Heart right ventricle (tissue), 16 donors: ENCODE measurements at regions of chr13 and their contacts with region 1.

Region 1: DNA sequence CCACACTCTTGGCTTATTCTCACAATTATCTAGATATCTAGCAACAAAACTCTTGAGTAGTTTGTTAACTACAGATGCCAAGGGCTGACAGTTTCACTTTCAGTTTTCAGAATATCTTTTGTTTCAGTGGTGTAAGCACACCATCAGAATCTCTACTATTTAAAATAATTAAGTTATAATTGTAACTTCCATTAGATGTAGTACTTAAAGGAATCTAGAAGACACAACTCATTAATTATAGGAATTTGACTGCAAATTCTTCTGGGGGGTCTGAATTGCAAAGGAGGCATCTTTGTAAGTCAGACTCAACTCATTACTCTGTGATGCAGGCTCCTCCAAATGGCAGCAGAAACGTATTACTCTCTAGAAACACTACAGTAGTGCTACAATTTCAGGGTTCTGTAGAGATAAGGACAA is 44.9 kb upstream of the USPL1 start:
- DNase-seq: peak in 1 of 2 donors; percentile 42
- ATAC-seq: peak in 6 of 8 donors; percentile 75 to 82 (median 77)
- H3K4me3 ChIP-seq: peak overlapping the region in 9 of 10 donors; percentile 25 to 51 (median 39)
- H3K27ac ChIP-seq: peak overlapping the region in 8 of 10 donors; percentile 38 to 80 (median 62)
- H3K4me1 ChIP-seq: peaks cover 0 to 57% (median 25%) of the 10 kb centered on the region in 9 donors
- H3K27me3 ChIP-seq: no peaks in the 10 kb centered on the region
- CTCF ChIP-seq: peak in 6 of 9 donors; percentile 16 to 59 (median 48)

Region 2: DNA sequence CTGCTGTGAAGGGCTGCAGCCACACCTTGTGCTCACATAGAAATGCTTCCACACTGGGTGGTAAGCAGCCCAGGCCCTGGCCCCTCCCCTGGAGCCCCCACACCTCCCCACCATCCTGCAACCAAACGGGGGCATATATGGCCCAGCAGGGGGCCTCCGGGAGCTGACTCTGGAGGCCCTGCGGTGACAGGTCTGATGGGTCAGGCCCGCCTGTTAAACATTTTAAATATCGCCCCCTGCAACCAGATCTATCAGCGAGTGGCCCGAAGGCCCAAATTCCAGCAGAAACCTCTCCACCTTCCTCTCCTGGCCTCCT is 217.5 kb before region 1 on chr13:
- intact Hi-C with region 1: loop called in 1 of 10 experiments (anchors 10 kb)
- DNase-seq: peak in 1 of 2 donors; percentile 37
- ATAC-seq: peak in 7 of 8 donors; percentile 63 to 87 (median 79)
- H3K4me3 ChIP-seq: no peak overlapping the region
- H3K27ac ChIP-seq: no peak overlapping the region
- H3K4me1 ChIP-seq: peaks cover 0 to 11% (median 0%) of the 10 kb centered on the region in 9 donors
- H3K27me3 ChIP-seq: no peaks in the 10 kb centered on the region
- CTCF ChIP-seq: peak; percentile 20 to 69 (median 60)

Region 3: DNA sequence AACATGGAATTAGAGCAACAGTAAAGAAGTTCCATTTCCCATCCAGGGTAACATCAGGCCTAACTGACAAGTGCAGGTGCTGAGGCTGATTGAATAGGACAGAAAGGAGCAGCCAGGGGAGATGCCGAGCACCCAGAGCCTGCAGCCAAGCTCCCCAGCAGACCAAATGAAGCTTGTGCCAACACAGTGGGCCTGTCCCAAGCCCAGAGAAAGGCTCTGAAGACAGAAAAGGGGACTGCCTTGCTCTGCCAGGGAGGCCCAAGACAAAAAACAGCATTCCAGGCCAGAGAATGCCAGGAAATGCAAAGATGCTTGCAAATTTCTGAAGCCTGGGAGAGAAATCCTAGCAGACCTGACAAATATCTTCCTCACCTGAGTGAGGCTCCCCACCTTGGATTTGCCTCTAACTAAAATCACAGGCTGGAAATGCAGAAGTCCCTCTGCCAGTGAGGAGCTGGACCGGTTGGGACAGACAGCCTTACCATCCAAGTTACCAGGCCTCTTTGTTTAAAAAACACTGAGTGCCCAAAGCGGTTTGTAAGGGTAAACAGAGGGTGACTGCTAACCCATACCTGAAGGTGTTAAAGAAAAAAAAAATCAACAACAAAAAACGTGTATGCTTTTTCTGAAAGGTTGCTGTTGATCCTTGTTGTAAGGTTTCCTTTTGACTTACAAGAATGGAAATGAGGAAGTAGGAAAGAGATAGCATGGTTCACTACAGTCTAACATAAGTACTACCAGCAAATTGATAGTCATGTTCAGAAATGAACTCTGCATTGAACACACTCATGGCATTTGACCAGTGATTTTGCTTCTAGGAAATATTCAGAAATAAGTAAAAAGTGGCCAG is 95.3 kb before region 1 on chr13:
- intact Hi-C with region 1: loop called in 2 of 10 experiments (anchors 10 kb)
- DNase-seq: no peak
- ATAC-seq: no peak
- H3K4me3 ChIP-seq: no peak overlapping the region
- H3K27ac ChIP-seq: no peak overlapping the region
- H3K4me1 ChIP-seq: no peaks in the 10 kb centered on the region
- H3K27me3 ChIP-seq: no peaks in the 10 kb centered on the region
- CTCF ChIP-seq: no peak

Region 4: DNA sequence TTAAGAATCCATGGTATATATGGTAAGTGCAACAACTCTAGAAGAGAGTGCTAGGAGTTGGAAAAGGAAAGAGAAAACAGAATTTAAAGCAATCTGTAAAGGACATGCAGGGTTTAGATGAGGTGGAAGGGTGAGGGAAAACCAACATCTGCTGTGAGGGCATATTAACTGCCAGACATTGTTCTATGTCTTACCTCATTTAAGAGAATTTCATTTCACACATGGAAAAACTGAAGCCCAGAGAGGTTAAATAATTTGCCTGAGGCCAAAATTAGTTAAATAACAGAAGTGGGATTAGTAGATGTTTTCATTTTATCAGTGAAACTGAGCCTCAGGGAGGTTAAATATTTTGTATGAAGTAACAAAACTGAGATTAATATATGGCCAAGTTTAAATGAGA is 37.4 kb after region 1 on chr13:
- intact Hi-C with region 1: loop called in 1 of 10 experiments (anchors 5 kb)
- DNase-seq: no peak
- ATAC-seq: no peak
- H3K4me3 ChIP-seq: no peak overlapping the region
- H3K27ac ChIP-seq: no peak overlapping the region
- H3K4me1 ChIP-seq: peaks cover 0 to 22% (median 12%) of the 10 kb centered on the region in 9 donors
- H3K27me3 ChIP-seq: no peaks in the 10 kb centered on the region
- CTCF ChIP-seq: no peak

Region 5: DNA sequence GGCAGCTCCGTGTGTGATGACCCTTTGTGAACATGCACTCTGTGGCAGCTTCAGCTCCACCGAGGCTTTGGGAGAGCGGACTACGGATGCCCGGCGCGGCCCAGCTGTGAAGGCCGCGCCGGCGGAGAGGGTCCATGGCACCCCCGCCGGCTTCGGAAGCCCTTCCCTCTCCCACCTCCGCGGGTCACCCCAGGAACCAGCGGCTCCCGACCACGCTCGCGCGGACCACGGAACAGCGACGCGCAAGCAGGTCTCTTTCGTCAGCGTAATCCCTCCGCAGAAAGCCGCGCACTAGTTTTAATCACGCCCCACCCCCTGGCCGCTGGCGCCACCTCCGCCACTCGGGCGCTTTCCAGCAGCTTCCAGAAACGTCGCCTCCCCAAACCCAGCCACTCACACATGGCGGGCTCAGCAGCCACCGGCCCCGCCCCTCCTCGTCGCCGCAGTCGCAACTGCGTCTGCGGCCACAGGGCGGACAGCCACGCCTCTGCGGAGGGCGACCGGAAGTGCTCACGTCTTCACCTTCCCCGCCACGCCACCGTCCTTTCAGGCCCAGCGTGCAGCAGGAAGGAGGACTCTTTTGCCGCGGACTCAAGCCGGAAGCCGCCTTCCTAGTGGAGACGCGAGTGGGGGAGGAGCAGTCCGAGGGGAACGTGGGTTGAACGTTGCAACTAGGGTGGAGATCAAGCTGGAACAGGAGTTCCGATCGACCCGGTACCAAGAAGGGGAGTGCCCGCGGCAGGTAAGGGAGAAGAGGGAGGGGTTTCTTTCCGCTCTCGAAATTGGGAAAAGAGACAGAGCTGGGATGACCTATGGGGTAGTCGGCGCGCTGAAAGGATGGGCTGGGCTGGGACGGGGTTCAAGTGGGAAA is 44.7 kb after region 1 on chr13 and contains the start of gene USPL1:
- intact Hi-C with region 1: loop called in 2 of 10 experiments (anchors 2 to 5 kb)
- DNase-seq: peak; percentile 98 to 99
- ATAC-seq: peak; percentile 95 to 99 (median 97)
- H3K4me3 ChIP-seq: peak within 1 kb of the TSS; percentile 63 to 91 (median 80)
- H3K27ac ChIP-seq: peak within 1 kb of the TSS; percentile 96 to 100 (median 99)
- H3K4me1 ChIP-seq: peaks cover 0 to 44% (median 27%) of the 10 kb centered on the region in 9 donors
- H3K27me3 ChIP-seq: no peaks in the 10 kb centered on the region
- CTCF ChIP-seq: peak in 8 of 9 donors; percentile 14 to 47 (median 38)
- total RNA-seq, gene USPL1: 8.9 to 10.6 (median 9.8) TPM

Region 6: DNA sequence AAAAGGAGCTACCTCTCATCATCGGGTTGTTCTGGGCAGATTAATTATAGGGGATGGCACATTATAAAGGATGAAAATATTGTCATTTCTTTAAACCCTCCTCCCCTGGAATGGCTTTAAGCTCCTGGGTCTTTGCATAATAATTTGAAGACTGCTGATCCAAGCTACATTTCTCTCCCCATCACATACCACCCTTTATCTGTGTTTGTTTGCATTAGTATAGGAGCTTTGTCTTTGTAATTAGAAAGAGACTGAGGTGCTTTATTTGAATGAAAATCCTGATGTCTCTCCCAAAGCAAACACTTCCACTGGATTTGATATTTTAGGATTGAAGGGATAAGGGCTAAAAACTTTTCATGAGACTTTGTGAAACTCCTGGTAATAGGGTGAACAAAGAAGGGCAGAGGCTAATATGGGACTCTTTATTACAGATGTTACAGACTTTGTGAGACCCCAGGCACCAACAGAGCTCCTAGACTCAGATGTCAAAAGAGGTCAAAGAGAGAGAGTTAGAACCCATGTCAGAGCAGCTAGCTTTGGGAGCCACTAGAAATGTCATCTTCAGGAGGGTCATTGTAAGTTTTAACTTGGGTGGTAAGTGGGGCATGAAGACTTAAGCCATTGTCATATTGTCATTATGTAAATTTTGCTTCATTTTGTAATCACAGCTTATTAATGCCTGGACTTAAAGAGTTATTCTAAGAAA is 1091.2 kb after region 1 on chr13:
- intact Hi-C with region 1: no loop called
- DNase-seq: no peak
- ATAC-seq: no peak
- H3K4me3 ChIP-seq: no peak overlapping the region
- H3K27ac ChIP-seq: no peak overlapping the region
- H3K4me1 ChIP-seq: no peaks in the 10 kb centered on the region
- H3K27me3 ChIP-seq: no peaks in the 10 kb centered on the region
- CTCF ChIP-seq: no peak